GM13976 (cell line): ENCODE measurements at regions of chr5 and their contacts with region 1.

Region 1: GRCh38 chr5:67246108-67246507 is 49.5 kb upstream of the CD180 start:
- DNase-seq: peak; percentile 34
- CTCF ChIP-seq: peak; percentile 39

Region 2: DNA sequence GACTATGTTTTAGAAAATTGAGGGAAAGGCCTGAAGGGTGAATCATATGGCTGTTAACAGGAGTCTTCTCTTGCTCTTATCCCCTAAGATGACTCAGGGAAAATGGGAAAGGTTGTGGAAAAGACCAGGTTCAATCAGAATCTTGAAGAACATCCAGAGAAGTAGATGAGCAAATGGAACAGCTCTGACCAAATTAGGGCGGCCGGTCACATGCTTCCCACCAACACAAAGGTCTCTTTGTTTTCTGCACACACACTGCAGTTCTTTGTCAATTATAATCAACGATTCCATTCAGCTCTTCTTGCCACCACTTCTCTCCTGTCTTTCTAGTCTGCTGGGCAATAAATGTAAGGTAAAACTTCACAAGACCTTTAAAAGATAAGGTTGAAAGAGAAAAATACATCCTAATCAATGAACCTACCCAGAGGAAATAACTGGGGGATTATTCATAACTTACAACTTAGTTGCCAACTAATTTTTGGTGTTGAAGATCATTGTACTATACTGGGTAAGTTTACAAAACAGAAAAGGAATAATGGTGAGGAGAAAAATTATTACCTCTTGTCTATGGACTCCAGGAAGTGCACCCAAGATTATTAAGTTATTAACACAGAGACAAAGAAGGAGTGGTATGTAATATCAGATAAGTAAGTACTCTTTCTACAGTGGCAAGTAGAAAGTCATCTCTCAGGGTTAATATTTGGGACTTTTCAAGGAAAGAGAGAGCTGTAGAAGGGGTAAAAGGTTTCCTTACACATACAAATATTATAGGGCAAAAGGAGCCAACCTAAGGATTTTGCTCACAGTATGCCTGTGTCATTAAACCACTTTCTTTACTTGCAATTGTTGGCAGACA is 527.5 kb after region 1 on chr5:
- in situ Hi-C with region 1: no loop called
- DNase-seq: no peak
- CTCF ChIP-seq: no peak

Region 3: GRCh38 chr5:68252673-68253623 is 1006.8 kb after region 1 on chr5:
- in situ Hi-C with region 1: loop called (anchors 10 kb)
- DNase-seq: peak; percentile 60
- CTCF ChIP-seq: peak; percentile 70

Region 4: GRCh38 chr5:68460147-68460798 is 1214.2 kb after region 1 on chr5:
- in situ Hi-C with region 1: loop called (anchors 25 kb)
- DNase-seq: peak; percentile 38
- CTCF ChIP-seq: peak; percentile 47